KBM-7 (cell line): ENCODE measurements at regions of chr16 and their contacts with region 1.

Region 1: GRCh38 chr16:30355144-30355894 is at the start of gene CD2BP2:
- DNase-seq: peak; percentile 98

Region 2: DNA sequence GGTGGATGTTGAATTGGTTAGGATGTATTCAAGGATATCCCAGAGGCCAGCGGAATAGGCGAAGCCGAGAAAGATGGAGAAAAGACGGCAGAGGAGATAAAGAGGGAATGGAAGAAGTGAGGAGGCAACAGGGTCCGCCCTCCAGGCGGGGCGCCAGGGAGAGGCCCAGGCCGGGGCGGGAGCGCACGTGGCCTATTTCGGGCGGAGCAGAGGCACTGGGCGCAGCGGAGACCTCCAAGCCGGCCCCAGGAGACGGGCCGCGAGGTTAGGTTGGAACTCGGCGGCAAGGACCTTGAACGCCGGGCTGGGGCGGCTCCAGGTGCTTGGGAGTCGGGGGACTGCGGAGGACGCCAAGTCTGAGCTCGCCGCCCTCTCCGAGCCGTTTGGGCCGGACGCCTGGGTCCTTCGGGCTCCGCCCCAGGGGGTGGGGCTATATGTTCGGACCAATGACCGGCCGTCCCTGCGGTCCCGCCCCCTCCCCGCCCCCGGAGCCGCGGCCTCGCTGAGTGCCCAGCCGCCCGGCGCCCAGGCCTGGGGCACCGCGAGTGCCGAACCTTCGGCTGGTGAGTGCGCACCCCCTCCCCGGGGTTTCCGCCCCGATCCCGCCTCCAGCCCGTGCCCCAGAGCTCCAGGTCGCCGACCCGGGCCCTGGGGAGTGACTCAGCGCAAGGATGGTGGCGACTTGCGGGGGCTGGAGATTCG is 51.9 kb after region 1 on chr16 and contains the start of gene ZNF771:
- in situ Hi-C with region 1: loop called (anchors 10 kb)
- DNase-seq: peak; percentile 92